HepG2 (cell line): ENCODE measurements at regions of chr19 and their contacts with region 1.

Region 1: GRCh38 chr19:12722566-12723380 is 959 bp downstream of the TNPO2 start:
- DNase-seq: peak; percentile 99
- ATAC-seq: peak; percentile 75
- H3K4me3 ChIP-seq: peak overlapping the region; percentile 92 to 96 (median 93)
- H3K27ac ChIP-seq: peak overlapping the region; percentile 77
- H3K4me1 ChIP-seq: peaks cover 20% of the 10 kb centered on the region
- H3K27me3 ChIP-seq: no peaks in the 10 kb centered on the region; a peak in 1 of 5 replicates
- CTCF ChIP-seq: no peak; the same call in 1 of the 2 replicates
- EP300 ChIP-seq: no peak
- POLR2A ChIP-seq: peak; percentile 69 to 75
- RAD21 ChIP-seq: no peak

Region 2: GRCh38 chr19:12736995-12737834 is 14.4 kb after region 1 on chr19 and contains the start of gene GET3:
- CTCF ChIA-PET with region 1: no interaction called
- POLR2A ChIA-PET with region 1: interaction called, 51 read pairs
- in situ Hi-C with region 1: no loop called
- intact Hi-C with region 1: loop called (anchors 1 kb)
- DNase-seq: peak; percentile 100
- ATAC-seq: peak; percentile 93
- H3K4me3 ChIP-seq: peak within 1 kb of the TSS; percentile 88 to 98 (median 93)
- H3K27ac ChIP-seq: peak within 1 kb of the TSS; percentile 99
- H3K4me1 ChIP-seq: peaks cover 43% of the 10 kb centered on the region
- H3K27me3 ChIP-seq: no peaks in the 10 kb centered on the region; a peak in 1 of 5 replicates
- CTCF ChIP-seq: no peak
- EP300 ChIP-seq: no peak; a peak in 1 of 4 replicates
- POLR2A ChIP-seq: peak; percentile 77 to 92
- RAD21 ChIP-seq: 0 out of 2 replicates have a peak, but pooled peaks have one; percentile 29
- total RNA-seq, gene GET3: 51.5 and 57.7 TPM in 2 replicates